HepG2 (cell line): ENCODE measurements at regions of chr14 and their contacts with region 1.

Region 1: GRCh38 chr14:34797747-34798583 is 77.2 kb downstream of the BAZ1A start:
- DNase-seq: peak; percentile 98
- ATAC-seq: peak; percentile 100
- H3K4me3 ChIP-seq: peak overlapping the region in 1 of 3 experiments; percentile 15; a peak in 1 of 6 replicates
- H3K27ac ChIP-seq: peak overlapping the region; percentile 18
- H3K4me1 ChIP-seq: peaks cover 12% of the 10 kb centered on the region
- H3K27me3 ChIP-seq: no peaks in the 10 kb centered on the region
- CTCF ChIP-seq: peak; percentile 66
- EP300 ChIP-seq: no peak
- POLR2A ChIP-seq: no peak
- RAD21 ChIP-seq: peak; percentile 69; the same call in 1 of the 2 replicates

Region 2: GRCh38 chr14:34837801-34838322 is 39.9 kb after region 1 on chr14:
- CTCF ChIA-PET with region 1: no interaction called
- POLR2A ChIA-PET with region 1: interaction called, 4 read pairs
- in situ Hi-C with region 1: no loop called
- intact Hi-C with region 1: loop called (anchors 5 kb)
- DNase-seq: peak; percentile 99
- ATAC-seq: peak; percentile 96
- H3K4me3 ChIP-seq: peak overlapping the region in 2 of 3 experiments; percentile 0 to 1; a peak in 2 of 6 replicates
- H3K27ac ChIP-seq: peak overlapping the region; percentile 77
- H3K4me1 ChIP-seq: peaks cover 64% of the 10 kb centered on the region
- H3K27me3 ChIP-seq: no peaks in the 10 kb centered on the region
- CTCF ChIP-seq: no peak
- EP300 ChIP-seq: peak in 1 of 2 experiments; percentile 82; a peak in 2 of 4 replicates
- POLR2A ChIP-seq: no peak
- RAD21 ChIP-seq: no peak

Region 3: GRCh38 chr14:34875031-34875922 is 77.3 kb after region 1 on chr14 and contains the start of gene BAZ1A:
- CTCF ChIA-PET with region 1: no interaction called
- POLR2A ChIA-PET with region 1: interaction called, 3 read pairs
- in situ Hi-C with region 1: no loop called
- intact Hi-C with region 1: loop called (anchors 1 kb)
- DNase-seq: peak; percentile 93
- ATAC-seq: peak; percentile 46
- H3K4me3 ChIP-seq: peak within 1 kb of the TSS; percentile 82 to 89 (median 87)
- H3K27ac ChIP-seq: peak within 1 kb of the TSS; percentile 85
- H3K4me1 ChIP-seq: peaks cover 34% of the 10 kb centered on the region
- H3K27me3 ChIP-seq: no peaks in the 10 kb centered on the region; a peak in 1 of 5 replicates
- CTCF ChIP-seq: peak; percentile 37; the same call in 1 of the 2 replicates
- EP300 ChIP-seq: no peak
- POLR2A ChIP-seq: peak in 1 of 2 experiments; percentile 93; a peak in 2 of 4 replicates
- RAD21 ChIP-seq: no peak; the same call in none of the 2 replicates
- total RNA-seq, gene BAZ1A: 56.8 and 68.3 TPM in 2 replicates